ENCODE measurements at regions of chr20 and their contacts with region 1.

Region 1: DNA sequence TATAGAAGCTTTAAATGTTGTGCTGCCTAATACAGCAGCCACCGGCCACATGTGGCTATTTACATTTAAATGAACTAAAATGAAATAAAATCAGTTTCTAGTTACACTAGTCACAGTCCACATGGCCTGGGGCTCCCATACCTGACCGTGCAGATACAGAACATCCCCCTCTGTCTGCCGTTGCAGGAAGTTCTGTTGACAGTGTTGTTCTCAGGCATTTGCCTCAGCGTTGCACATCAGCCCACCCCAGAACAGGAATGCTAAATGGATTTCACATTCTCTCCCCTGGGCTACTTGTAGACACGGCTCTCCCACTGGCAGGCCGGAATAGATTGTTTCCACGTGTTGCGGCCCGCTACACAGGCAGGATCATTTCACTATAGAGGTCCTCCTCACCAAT is 26.3 kb downstream of the JAG1 start:
- ATAC-seq: peak; percentile 3 to 87 (median 52)
- H3K4me3 ChIP-seq: no peak overlapping the region
- H3K27ac ChIP-seq: no peak overlapping the region
- H3K4me1 ChIP-seq: peaks cover 49 to 50% of the 10 kb centered on the region in 2 donors

Region 2: GRCh38 chr20:10469599-10469998 is 177.9 kb before region 1 on chr20:
- in situ Hi-C with region 1: loop called in 1 of 9 experiments (anchors 25 kb)
- ATAC-seq: peak in 7 of 8 experiments; percentile 30 to 95 (median 72)
- H3K4me3 ChIP-seq: no peak overlapping the region
- H3K27ac ChIP-seq: no peak overlapping the region
- H3K4me1 ChIP-seq: peaks cover 5 to 6% of the 10 kb centered on the region in 2 donors

Region 3: DNA sequence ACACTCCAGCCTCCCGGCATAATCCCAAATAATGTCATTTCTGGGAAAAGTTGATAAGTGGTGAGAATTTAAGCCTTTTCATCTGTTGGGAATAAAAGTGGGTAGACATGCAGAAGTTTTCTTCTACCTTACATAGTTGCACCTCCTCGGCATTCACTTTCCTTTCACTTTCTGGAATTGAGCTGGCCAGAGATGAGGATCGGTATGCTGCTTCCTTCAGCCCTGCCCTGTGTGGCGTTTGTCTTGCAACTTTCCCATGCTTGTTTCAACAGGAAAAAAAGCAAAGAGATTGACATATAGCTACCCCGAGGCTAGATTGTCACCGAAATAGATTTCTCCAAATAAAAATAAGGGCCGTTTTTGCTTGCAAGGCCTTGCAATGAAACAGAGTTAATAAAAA is 92.1 kb after region 1 on chr20:
- in situ Hi-C with region 1: no loop called
- ATAC-seq: peak in 3 of 8 experiments; percentile 72 to 91 (median 87)
- H3K4me3 ChIP-seq: no peak overlapping the region
- H3K27ac ChIP-seq: no peak overlapping the region
- H3K4me1 ChIP-seq: no peaks in the 10 kb centered on the region

Region 4: GRCh38 chr20:11323816-11324215 is 676.4 kb after region 1 on chr20:
- in situ Hi-C with region 1: no loop called
- ATAC-seq: no peak
- H3K4me3 ChIP-seq: no peak overlapping the region
- H3K27ac ChIP-seq: no peak overlapping the region
- H3K4me1 ChIP-seq: no peaks in the 10 kb centered on the region

Measured in motor neuron (in vitro differentiated cells).